Dorsolateral prefrontal cortex (tissue), 120 donors: ENCODE measurements at regions of chr3 and their contacts with region 1.

Region 1: GRCh38 chr3:138594150-138594934 is at the start of gene CEP70:
- DNase-seq: peak; percentile 74 to 95 (median 90)
- H3K4me3 ChIP-seq: peak within 1 kb of the TSS; percentile 56 to 98 (median 83)
- H3K27ac ChIP-seq: peak within 1 kb of the TSS; percentile 12 to 96 (median 87)
- H3K27me3 ChIP-seq: no peaks in the 10 kb centered on the region
- CTCF ChIP-seq: peak; percentile 74 to 97 (median 92)
- total RNA-seq, gene CEP70: 31.4 to 63.5 (median 46.7) TPM

Region 2: GRCh38 chr3:138417559-138417982 is 176.8 kb before region 1 on chr3:
- intact Hi-C with region 1: loop called in 1 of 2 experiments (anchors 10 kb)
- DNase-seq: peak; percentile 66 to 85 (median 79)
- H3K4me3 ChIP-seq: no peak overlapping the region
- H3K27ac ChIP-seq: no peak overlapping the region
- H3K27me3 ChIP-seq: no peaks in the 10 kb centered on the region
- CTCF ChIP-seq: peak; percentile 72 to 96 (median 89)

Region 3: GRCh38 chr3:138608322-138609135 is 14.2 kb after region 1 on chr3 and contains the start of gene FAIM:
- intact Hi-C with region 1: loop called in 1 of 2 experiments (anchors 1 kb)
- DNase-seq: peak; percentile 47 to 79 (median 62)
- H3K4me3 ChIP-seq: peak within 1 kb of the TSS; percentile 44 to 91 (median 80)
- H3K27ac ChIP-seq: peak within 1 kb of the TSS; percentile 55 to 99 (median 94)
- H3K27me3 ChIP-seq: no peaks in the 10 kb centered on the region
- CTCF ChIP-seq: peak in 5 of 56 donors; percentile 9 to 26 (median 15)
- total RNA-seq, gene FAIM: 6.4 to 20.4 (median 11.4) TPM

Region 4: DNA sequence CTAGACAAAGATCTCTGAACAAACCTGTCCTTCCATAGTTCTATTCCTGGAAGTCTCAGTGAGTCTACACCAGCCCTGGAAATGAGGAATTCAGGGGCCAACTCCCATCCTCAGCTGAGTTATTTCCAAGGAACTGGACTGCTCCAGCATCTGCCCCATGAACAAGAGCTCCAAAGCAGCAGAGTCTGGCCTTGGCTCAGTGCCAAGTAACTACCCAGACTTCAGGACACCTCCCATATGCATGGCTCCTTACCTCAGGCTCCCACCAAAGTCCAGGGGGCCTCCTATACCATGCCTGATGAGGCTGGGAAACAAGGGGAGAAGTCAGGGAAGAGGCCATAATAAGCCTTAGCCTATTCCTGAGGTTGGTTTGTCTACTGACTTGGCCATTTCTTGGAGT is 59.2 kb after region 1 on chr3:
- intact Hi-C with region 1: no loop called
- DNase-seq: no peak
- H3K4me3 ChIP-seq: no peak overlapping the region
- H3K27ac ChIP-seq: no peak overlapping the region
- H3K27me3 ChIP-seq: no peaks in the 10 kb centered on the region
- CTCF ChIP-seq: no peak

Region 5: DNA sequence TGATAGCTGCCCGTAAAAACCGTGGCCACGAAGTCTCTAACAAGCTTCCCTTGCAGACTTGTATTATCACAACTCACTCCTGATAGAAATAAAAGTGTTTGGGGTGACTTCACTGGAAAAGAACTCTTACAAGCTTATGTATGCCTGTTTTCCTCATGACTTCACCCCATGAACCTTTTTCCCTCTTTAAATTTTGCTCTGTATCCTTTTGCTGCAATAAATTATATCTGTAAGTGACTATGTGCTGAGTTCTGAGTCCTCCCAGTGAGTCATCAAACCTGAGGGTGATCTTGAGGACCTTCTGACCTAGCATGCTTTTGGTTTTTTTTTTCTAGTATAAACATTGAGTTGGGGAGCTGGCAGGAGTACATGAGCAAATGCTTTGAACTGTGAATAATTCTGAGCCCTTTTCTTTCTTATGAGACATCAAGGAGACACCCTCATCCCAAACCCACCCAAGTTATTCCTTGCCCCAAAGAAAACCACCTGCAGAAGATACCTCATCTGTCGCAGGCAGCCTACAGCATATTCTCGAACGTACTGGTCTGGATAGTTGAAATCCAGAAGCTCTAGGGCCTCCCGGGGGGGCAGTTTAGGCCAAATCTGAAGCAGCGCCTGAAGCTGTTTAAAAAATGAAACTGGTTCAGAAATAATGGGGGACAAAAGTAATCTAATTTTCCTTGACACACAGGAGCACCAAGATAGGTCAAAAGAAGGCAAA is 100.1 kb after region 1 on chr3:
- intact Hi-C with region 1: loop called in 1 of 2 experiments (anchors 5 kb)
- DNase-seq: no peak
- H3K4me3 ChIP-seq: no peak overlapping the region
- H3K27ac ChIP-seq: no peak overlapping the region
- H3K27me3 ChIP-seq: no peaks in the 10 kb centered on the region
- CTCF ChIP-seq: no peak

Region 6: GRCh38 chr3:138834359-138835212 is 240.2 kb after region 1 on chr3 and contains the start of gene PIK3CB:
- intact Hi-C with region 1: loop called in 1 of 2 experiments (anchors 5 kb)
- DNase-seq: peak; percentile 73 to 93 (median 87)
- H3K4me3 ChIP-seq: peak within 1 kb of the TSS; percentile 73 to 99 (median 94)
- H3K27ac ChIP-seq: peak within 1 kb of the TSS; percentile 88 to 99 (median 97)
- H3K27me3 ChIP-seq: no peaks in the 10 kb centered on the region
- CTCF ChIP-seq: peak in 44 of 56 donors; percentile 4 to 55 (median 31)
- total RNA-seq, gene PIK3CB: 36.8 to 102 (median 70.6) TPM

Region 7: GRCh38 chr3:138915503-138916498 is 321.5 kb after region 1 on chr3:
- intact Hi-C with region 1: loop called (anchors 1 to 2 kb)
- DNase-seq: peak; percentile 78 to 90 (median 86)
- H3K4me3 ChIP-seq: peak overlapping the region; percentile 50 to 96 (median 79)
- H3K27ac ChIP-seq: peak overlapping the region; percentile 7 to 97 (median 88)
- H3K27me3 ChIP-seq: no peaks in the 10 kb centered on the region
- CTCF ChIP-seq: peak; percentile 63 to 97 (median 83)

Region 8: GRCh38 chr3:139329345-139329850 is 735.1 kb after region 1 on chr3:
- intact Hi-C with region 1: loop called in 1 of 2 experiments (anchors 10 kb)
- DNase-seq: peak; percentile 67 to 92 (median 84)
- H3K4me3 ChIP-seq: peak overlapping the region in 55 of 59 donors; percentile 5 to 61 (median 35)
- H3K27ac ChIP-seq: peak overlapping the region in 11 of 59 donors; percentile 13 to 77 (median 53)
- H3K27me3 ChIP-seq: peaks cover 0 to 7% (median 0%) of the 10 kb centered on the region in 45 donors
- CTCF ChIP-seq: peak; percentile 91 to 100 (median 100)